ENCODE measurements at regions of chr18 and their contacts with region 1.

Region 1: DNA sequence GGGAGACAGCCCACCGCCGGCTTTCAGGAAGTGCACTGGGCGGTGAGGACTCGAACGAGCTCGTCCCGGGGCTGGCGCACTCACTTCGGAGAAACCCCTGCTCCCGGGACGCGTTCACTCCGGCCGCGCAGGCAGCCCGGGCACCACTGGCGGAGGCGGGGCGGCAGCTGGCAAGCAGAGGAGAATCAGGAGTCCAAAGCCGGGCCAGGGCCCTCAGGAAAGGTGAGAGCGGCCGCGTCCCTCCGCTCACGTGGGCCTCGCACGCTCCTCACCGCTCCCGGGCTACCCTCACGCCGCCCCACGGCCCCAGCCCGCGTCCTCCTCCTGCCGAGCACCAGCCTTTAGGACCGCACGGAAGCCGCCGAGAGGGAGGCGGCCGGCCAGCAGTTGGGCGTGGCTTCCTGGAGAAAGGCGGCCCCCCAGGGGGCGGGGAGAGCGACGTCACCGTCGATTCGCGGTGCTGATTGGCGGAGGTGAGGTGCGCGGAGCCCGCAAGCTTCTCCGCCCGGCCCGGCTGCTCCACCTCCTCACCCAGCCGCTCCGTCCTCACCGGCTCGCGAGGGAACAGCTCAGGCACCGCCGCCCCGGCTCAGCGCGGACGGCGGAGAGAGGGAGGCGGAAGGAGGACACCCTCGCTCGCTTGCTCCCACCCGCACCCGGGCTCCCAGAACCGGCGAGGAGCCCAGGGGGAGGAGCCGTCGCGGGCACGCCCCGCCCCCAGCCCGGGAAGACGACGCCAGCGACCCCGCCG is at the start of gene ZCCHC2:
- DNase-seq: peak; percentile 95 to 100 (median 98)
- ATAC-seq: peak; percentile 74
- H3K4me3 ChIP-seq: peak within 1 kb of the TSS; percentile 92
- H3K4me3 Mint-ChIP-seq: peak within 1 kb of the TSS; percentile 98
- H3K27ac ChIP-seq: peak within 1 kb of the TSS; percentile 62 to 75
- H3K27ac Mint-ChIP-seq: peak within 1 kb of the TSS; percentile 93
- H3K4me1 ChIP-seq: peaks cover 25% of the 10 kb centered on the region
- H3K4me1 Mint-ChIP-seq: peaks cover 40% of the 10 kb centered on the region
- H3K27me3 ChIP-seq: no peaks in the 10 kb centered on the region
- H3K27me3 Mint-ChIP-seq: no peaks in the 10 kb centered on the region
- CTCF ChIP-seq: no peak
- total RNA-seq, gene ZCCHC2: 85.0 to 85.4 TPM

Region 2: GRCh38 chr18:62425465-62426195 is 97.0 kb before region 1 on chr18:
- CTCF ChIA-PET with region 1: interaction called, 5 read pairs
- POLR2A ChIA-PET with region 1: interaction called, 14 read pairs
- intact Hi-C with region 1: loop called (anchors 2 to 5 kb)
- DNase-seq: peak in 13 of 14 experiments; percentile 5 to 85 (median 31)
- ATAC-seq: peak; percentile 51
- H3K4me3 ChIP-seq: no peak overlapping the region
- H3K4me3 Mint-ChIP-seq: no peak overlapping the region
- H3K27ac ChIP-seq: no peak overlapping the region
- H3K27ac Mint-ChIP-seq: no peak overlapping the region
- H3K4me1 ChIP-seq: peaks cover 12% of the 10 kb centered on the region
- H3K4me1 Mint-ChIP-seq: peaks cover 18% of the 10 kb centered on the region
- H3K27me3 ChIP-seq: no peaks in the 10 kb centered on the region
- H3K27me3 Mint-ChIP-seq: no peaks in the 10 kb centered on the region
- CTCF ChIP-seq: peak; percentile 83

Region 3: DNA sequence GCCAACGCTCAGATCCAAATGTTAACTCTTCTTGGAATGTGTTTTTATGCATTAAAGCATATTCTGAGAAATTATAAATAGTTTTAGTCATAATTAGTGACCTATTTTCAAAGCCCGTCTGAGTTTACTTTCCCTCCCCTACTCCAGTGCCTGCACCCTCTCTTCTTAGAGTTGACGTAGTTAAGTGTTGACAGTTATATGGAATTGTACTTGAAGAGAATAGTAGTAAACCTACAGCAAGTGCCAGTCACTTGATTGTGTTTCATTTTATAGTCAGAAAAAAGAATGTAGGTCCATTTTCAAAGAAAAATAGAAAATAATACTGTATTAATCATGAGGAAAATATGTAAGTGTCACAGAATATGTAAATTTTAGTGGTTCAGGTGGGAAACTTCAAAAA is 41.4 kb after region 1 on chr18:
- CTCF ChIA-PET with region 1: interaction called, 4 read pairs
- POLR2A ChIA-PET with region 1: interaction called, 3 read pairs
- intact Hi-C with region 1: loop called in 1 of 2 experiments (anchors 5 kb)
- DNase-seq: no peak
- ATAC-seq: no peak
- H3K4me3 ChIP-seq: no peak overlapping the region
- H3K4me3 Mint-ChIP-seq: no peak overlapping the region
- H3K27ac ChIP-seq: no peak overlapping the region
- H3K27ac Mint-ChIP-seq: no peak overlapping the region
- H3K4me1 ChIP-seq: no peaks in the 10 kb centered on the region
- H3K4me1 Mint-ChIP-seq: no peaks in the 10 kb centered on the region
- H3K27me3 ChIP-seq: no peaks in the 10 kb centered on the region
- H3K27me3 Mint-ChIP-seq: no peaks in the 10 kb centered on the region
- CTCF ChIP-seq: no peak

Region 4: GRCh38 chr18:63155169-63155852 is 632.6 kb after region 1 on chr18:
- CTCF ChIA-PET with region 1: no interaction called
- POLR2A ChIA-PET with region 1: no interaction called
- intact Hi-C with region 1: loop called in 1 of 2 experiments (anchors 10 kb)
- DNase-seq: peak; percentile 63 to 90 (median 76)
- ATAC-seq: peak; percentile 75
- H3K4me3 ChIP-seq: peak overlapping the region; percentile 51
- H3K4me3 Mint-ChIP-seq: peak overlapping the region; percentile 85
- H3K27ac ChIP-seq: peak overlapping the region; percentile 95 to 96
- H3K27ac Mint-ChIP-seq: peak overlapping the region; percentile 91
- H3K4me1 ChIP-seq: peaks cover 97% of the 10 kb centered on the region
- H3K4me1 Mint-ChIP-seq: peaks cover 100% of the 10 kb centered on the region
- H3K27me3 ChIP-seq: no peaks in the 10 kb centered on the region
- H3K27me3 Mint-ChIP-seq: no peaks in the 10 kb centered on the region
- CTCF ChIP-seq: peak; percentile 94

Measured in CD4-positive, alpha-beta T cell (primary cell).